ENCODE measurements at regions of chr6 and their contacts with region 1.

Region 1: DNA sequence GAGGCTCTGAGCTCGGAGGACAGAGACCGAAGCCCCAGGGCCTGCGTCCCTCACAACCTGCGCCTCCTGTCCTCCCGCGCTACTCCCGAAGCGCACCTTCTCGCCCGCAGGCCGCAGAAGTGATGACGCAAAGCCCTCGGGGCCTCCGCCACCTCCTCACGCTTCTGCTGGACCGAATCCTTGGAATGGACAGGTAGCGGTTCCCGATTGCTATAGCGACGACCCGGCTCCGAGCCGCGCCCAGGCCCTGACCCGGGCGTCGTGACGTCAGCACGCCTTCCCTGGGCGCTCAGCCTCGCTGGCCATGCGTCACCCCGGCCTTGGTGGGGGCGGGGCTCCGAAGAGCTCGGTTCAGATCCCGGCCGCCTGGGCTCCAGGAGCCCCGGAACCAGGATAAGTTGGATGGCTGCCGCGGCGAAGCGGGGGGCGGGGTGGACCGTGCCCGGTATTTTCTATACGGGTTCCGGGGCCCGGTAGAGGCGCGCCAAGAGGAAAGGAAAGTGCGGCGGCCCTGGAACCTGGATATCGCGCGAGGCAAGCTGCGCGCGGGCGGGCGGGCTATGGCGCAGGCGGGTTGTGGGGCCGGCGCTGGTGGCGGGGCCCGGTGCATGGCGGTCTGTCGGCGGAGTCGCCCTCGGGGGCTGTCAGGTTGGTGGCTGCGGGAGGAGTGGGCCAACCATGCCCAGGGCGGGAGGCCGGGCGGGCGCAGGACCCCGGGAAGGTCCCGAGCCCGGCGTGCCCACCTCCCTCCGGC is at the start of gene ZNF76:
- DNase-seq: peak; percentile 94
- ATAC-seq: peak; percentile 84
- H3K4me3 Mint-ChIP-seq: peak within 1 kb of the TSS; percentile 94
- H3K27ac Mint-ChIP-seq: peak within 1 kb of the TSS; percentile 94
- H3K4me1 Mint-ChIP-seq: peaks cover 44% of the 10 kb centered on the region
- H3K27me3 Mint-ChIP-seq: no peaks in the 10 kb centered on the region
- CTCF ChIP-seq: no peak
- total RNA-seq, gene ZNF76: 34.4 to 35.2 TPM

Region 2: DNA sequence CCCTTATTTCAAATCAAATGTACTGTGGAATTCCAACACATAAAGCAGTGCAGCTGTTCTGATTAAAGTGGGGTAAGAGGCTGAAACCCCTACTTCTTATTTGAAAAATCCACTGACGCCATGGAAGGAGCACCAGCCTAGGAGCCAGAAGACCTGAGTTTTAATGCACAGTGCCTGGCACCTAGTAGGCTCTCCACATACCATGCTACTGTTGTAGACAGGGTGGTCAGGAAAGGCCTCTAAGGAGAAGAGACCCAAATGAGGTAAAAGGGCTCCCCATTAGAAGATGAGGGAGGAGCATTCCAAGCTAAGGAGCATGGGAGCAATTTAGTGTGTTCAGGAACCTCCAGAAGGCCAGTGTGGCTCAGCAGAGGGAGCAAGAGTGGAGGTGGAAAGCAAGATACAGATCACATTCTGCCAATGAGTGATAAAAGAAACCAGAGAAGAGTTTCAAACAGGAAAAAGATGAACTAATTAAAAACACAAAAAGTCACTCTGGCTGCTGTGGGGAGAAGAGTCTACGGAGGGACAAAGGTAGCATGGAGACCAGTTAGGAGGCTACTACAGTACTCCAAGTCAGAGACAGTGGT is 11.6 kb before region 1 on chr6:
- CTCF ChIA-PET with region 1: interaction called, 52 read pairs
- POLR2A ChIA-PET with region 1: interaction called, 3 read pairs
- intact Hi-C with region 1: no loop called
- DNase-seq: no peak
- ATAC-seq: peak; percentile 70
- H3K4me3 Mint-ChIP-seq: no peak overlapping the region
- H3K27ac Mint-ChIP-seq: peak overlapping the region; percentile 11
- H3K4me1 Mint-ChIP-seq: peaks cover 11% of the 10 kb centered on the region
- H3K27me3 Mint-ChIP-seq: no peaks in the 10 kb centered on the region
- CTCF ChIP-seq: no peak

Measured in activated CD8-positive, alpha-beta T cell treated with anti-CD3 and anti-CD28 coated beads for 36 hours (primary cell).